Activated CD4-positive, alpha-beta T cell treated with anti-CD3 and anti-CD28 coated beads, Interleukin-2, amount 10 ng/mL, durations not matched to agents 24 days and 14 days (primary cell): ENCODE measurements at regions of chr1 and their contacts with region 1.

Region 1: DNA sequence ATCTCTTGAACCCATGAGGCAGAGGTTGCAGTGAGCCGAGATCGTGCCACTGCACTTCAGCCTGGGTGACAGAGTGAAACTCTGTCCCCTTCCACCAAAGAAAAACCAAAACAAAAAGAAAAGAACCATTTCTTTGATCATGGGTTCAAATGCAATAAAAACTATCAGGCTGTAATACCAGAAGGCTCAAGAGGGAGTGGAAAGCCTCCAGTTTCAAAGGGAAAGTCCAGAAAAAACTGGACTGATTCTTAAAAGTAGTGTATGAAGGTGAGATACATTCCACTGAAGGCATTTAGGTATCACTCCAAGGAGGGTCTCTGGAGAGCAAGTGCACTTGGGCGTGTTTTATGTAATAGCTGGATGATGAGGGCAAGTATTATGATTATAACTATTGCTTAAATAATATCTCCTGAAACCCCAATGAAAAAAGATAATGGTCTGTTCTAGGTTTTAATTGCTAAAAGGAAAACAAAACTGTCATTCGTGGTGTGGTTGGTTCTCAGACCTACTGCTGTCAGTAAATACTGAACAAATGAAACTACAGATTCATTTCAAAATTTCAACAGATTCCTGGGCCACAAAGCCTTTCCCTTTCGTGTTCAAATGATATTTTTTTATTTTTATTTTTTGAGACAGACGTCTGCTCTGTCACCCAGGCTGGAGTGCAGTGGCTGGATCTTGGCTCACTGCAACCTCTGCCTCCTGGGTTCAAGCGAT is 6.0 kb upstream of the CAMTA1 start:
- DNase-seq: no peak
- H3K4me3 Mint-ChIP-seq: no peak overlapping the region
- H3K27ac Mint-ChIP-seq: no peak overlapping the region
- H3K4me1 Mint-ChIP-seq: peaks cover 15% of the 10 kb centered on the region
- H3K27me3 Mint-ChIP-seq: peaks cover 8% of the 10 kb centered on the region

Region 2: GRCh38 chr1:5847013-5847659 is 932.1 kb before region 1 on chr1:
- intact Hi-C with region 1: no loop called
- DNase-seq: peak; percentile 70
- H3K4me3 Mint-ChIP-seq: no peak overlapping the region
- H3K27ac Mint-ChIP-seq: no peak overlapping the region
- H3K4me1 Mint-ChIP-seq: no peaks in the 10 kb centered on the region
- H3K27me3 Mint-ChIP-seq: no peaks in the 10 kb centered on the region

Region 3: GRCh38 chr1:6743189-6744101 is 35.8 kb before region 1 on chr1:
- intact Hi-C with region 1: loop called (anchors 1 kb)
- DNase-seq: peak; percentile 76
- H3K4me3 Mint-ChIP-seq: no peak overlapping the region
- H3K27ac Mint-ChIP-seq: no peak overlapping the region
- H3K4me1 Mint-ChIP-seq: peaks cover 12% of the 10 kb centered on the region
- H3K27me3 Mint-ChIP-seq: peaks cover 11% of the 10 kb centered on the region

Region 4: GRCh38 chr1:6794164-6794563 is 14.9 kb after region 1 on chr1:
- intact Hi-C with region 1: no loop called
- DNase-seq: no peak
- H3K4me3 Mint-ChIP-seq: no peak overlapping the region
- H3K27ac Mint-ChIP-seq: no peak overlapping the region
- H3K4me1 Mint-ChIP-seq: peaks cover 6% of the 10 kb centered on the region
- H3K27me3 Mint-ChIP-seq: no peaks in the 10 kb centered on the region

Region 5: DNA sequence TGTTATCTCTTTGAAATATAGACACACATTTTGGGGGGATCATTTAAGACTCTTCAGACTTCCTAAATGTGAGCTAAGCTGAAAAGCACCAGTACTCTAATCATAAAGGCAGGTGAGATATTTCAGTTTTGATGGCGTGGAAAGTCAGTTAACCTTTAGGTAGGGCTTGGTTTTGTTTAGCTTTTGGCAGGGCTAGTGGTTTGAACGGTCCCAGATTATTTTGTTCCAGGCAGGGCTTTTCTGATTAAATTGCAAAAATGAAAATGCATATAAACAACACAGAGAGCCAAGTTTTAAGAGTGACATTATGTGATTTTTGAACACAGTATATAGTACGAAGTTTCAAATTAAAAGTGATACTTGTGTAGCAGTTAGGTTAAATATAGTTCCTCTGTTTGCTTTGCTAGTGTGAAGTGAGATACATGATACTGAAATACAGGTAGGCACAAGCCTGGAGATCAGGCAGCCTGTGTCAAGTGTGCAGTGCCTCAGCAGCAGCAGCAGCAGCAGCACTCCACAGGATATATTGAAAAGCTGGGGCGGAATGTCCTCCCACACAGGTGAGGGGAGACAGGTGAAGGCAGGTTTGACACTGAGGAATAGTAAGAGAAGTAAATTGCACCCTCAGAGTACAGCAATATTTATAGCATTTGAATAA is 53.4 kb after region 1 on chr1:
- intact Hi-C with region 1: no loop called
- DNase-seq: no peak
- H3K4me3 Mint-ChIP-seq: no peak overlapping the region
- H3K27ac Mint-ChIP-seq: no peak overlapping the region
- H3K4me1 Mint-ChIP-seq: peaks cover 3% of the 10 kb centered on the region
- H3K27me3 Mint-ChIP-seq: no peaks in the 10 kb centered on the region